HCT116 (cell line): ENCODE measurements at regions of chr3 and their contacts with region 1.

Region 1: DNA sequence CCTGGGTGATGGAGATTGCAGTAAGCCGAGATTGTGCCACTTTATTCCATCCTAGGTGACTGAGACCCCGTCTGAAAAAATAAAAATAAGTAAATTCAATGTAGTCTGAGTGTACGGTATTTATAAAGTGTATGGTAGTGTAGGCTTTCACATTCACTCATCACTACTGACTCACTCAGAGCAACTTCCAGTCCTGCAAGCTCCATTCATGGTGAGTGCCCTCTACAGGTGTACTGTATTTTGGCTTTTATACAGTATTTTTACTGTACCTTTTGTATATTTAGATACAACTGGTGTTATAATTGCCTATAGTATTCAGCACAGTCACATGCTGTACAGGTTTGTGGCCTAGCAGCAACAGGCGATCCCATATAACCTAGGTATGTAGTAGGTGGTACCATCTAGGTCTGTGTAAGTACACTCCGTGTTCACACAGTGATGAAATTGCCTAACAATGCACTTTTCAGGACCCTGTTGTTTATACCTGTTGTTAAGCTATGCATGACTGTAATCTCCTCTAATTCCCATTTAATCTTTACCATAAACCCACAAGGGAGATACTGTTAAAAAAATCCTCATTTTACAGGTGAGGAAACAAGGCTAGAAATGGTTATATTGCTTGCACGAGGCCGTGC is 19.3 kb downstream of the CACNA1D start:
- DNase-seq: peak; percentile 21
- ATAC-seq: peak; percentile 88
- H3K4me3 ChIP-seq: no peak overlapping the region
- H3K27ac ChIP-seq: no peak overlapping the region
- H3K4me1 ChIP-seq: no peaks in the 10 kb centered on the region
- H3K27me3 ChIP-seq: peaks cover 14% of the 10 kb centered on the region
- CTCF ChIP-seq: peak; percentile 30 to 58 (median 57); a peak in 5 of 6 replicates
- POLR2A ChIP-seq: no peak
- RAD21 ChIP-seq: peak; percentile 45; the same call in 1 of the 2 replicates

Region 2: GRCh38 chr3:53180305-53181023 is 333.2 kb before region 1 on chr3:
- CTCF ChIA-PET with region 1: no interaction called
- POLR2A ChIA-PET with region 1: no interaction called
- RAD21 ChIA-PET with region 1: no interaction called
- intact Hi-C with region 1: no loop called
- DNase-seq: no peak
- ATAC-seq: no peak
- H3K4me3 ChIP-seq: no peak overlapping the region
- H3K27ac ChIP-seq: no peak overlapping the region
- H3K4me1 ChIP-seq: no peaks in the 10 kb centered on the region; a peak in 1 of 4 replicates
- H3K27me3 ChIP-seq: no peaks in the 10 kb centered on the region
- CTCF ChIP-seq: no peak
- POLR2A ChIP-seq: no peak
- RAD21 ChIP-seq: no peak

Region 3: GRCh38 chr3:53502737-53503136 is 10.9 kb before region 1 on chr3:
- CTCF ChIA-PET with region 1: interaction called, 10 read pairs
- POLR2A ChIA-PET with region 1: no interaction called
- RAD21 ChIA-PET with region 1: no interaction called
- intact Hi-C with region 1: no loop called
- DNase-seq: no peak
- ATAC-seq: no peak
- H3K4me3 ChIP-seq: no peak overlapping the region
- H3K27ac ChIP-seq: no peak overlapping the region
- H3K4me1 ChIP-seq: no peaks in the 10 kb centered on the region
- H3K27me3 ChIP-seq: no peaks in the 10 kb centered on the region
- CTCF ChIP-seq: no peak
- POLR2A ChIP-seq: no peak
- RAD21 ChIP-seq: no peak